ENCODE measurements at regions of chr5 and their contacts with region 1.

Region 1: DNA sequence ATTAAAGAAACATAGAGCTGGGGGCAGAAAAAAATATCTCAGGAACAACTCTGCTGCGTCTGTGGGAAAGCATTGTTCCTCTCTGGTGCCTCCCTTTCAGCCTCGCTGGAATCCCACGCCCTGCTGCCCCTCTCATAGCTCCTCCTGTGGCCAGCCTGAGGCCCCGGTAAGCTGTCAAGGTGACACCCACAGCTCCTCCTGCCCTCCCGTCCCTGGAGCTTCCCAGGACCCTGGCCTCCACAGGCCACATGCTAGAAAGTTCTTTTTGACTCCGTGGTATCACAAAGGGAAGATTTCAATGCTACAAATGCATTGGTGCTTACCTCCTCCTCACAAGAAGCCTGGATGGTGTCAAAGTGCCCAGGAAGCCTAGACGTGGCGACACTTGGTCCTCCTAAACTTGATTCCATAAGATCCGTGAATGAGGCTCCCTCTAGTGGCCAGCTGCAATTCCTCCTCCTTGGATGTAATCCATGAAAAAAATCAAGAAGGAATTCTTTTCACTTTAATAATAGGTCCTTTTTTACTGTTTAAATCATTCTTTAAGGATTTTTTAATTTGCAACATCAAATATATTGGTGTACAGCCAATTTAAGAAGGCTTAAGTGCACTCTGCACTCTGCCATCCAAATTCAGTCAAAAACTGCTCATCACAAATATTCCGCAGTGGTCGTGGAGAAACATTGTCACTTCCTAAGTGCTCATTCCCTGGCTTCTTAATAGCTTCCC is 104.9 kb downstream of the CFAP90 start:
- DNase-seq: no peak
- H3K4me3 ChIP-seq: no peak overlapping the region
- H3K27ac ChIP-seq: no peak overlapping the region
- H3K4me1 ChIP-seq: no peaks in the 10 kb centered on the region
- H3K27me3 ChIP-seq: no peaks in the 10 kb centered on the region
- CTCF ChIP-seq: peak; percentile 47 to 89 (median 74)
- POLR2A ChIP-seq: no peak

Region 2: GRCh38 chr5:6765612-6766525 is 980.2 kb before region 1 on chr5:
- intact Hi-C with region 1: loop called (anchors 10 kb)
- DNase-seq: no peak
- H3K4me3 ChIP-seq: peak overlapping the region in 2 of 4 donors; percentile 9 to 47
- H3K27ac ChIP-seq: peak overlapping the region in 2 of 4 donors; percentile 16 to 70
- H3K4me1 ChIP-seq: peaks cover 13 to 28% (median 20%) of the 10 kb centered on the region in 3 donors
- H3K27me3 ChIP-seq: no peaks in the 10 kb centered on the region
- CTCF ChIP-seq: peak; percentile 30 to 96 (median 82)
- POLR2A ChIP-seq: no peak

Region 3: DNA sequence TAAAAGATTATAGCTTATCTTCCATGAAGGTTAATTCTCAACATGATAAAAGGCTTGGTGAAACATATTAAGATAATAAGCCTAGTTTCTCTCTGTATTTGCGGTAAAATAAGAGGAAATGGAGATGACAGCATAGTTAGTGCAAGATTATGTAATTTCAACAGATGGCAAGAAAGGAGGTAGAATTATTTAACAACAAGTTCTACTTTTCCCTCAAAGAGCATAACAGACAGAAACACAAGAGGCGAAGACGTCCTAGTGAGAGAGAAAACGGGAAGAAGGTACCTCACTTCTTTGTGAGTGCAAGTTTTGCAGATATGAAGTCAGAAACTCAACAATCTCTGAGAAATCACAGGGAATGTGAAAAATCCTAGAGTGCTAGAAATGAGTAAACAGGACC is 494.9 kb before region 1 on chr5:
- intact Hi-C with region 1: loop called (anchors 10 kb)
- DNase-seq: no peak
- H3K4me3 ChIP-seq: no peak overlapping the region
- H3K27ac ChIP-seq: no peak overlapping the region
- H3K4me1 ChIP-seq: no peaks in the 10 kb centered on the region
- H3K27me3 ChIP-seq: no peaks in the 10 kb centered on the region
- CTCF ChIP-seq: no peak
- POLR2A ChIP-seq: no peak

Measured in esophagus squamous epithelium (tissue), 5 donors.